ENCODE measurements at regions of chr19 and their contacts with region 1.

Region 1: DNA sequence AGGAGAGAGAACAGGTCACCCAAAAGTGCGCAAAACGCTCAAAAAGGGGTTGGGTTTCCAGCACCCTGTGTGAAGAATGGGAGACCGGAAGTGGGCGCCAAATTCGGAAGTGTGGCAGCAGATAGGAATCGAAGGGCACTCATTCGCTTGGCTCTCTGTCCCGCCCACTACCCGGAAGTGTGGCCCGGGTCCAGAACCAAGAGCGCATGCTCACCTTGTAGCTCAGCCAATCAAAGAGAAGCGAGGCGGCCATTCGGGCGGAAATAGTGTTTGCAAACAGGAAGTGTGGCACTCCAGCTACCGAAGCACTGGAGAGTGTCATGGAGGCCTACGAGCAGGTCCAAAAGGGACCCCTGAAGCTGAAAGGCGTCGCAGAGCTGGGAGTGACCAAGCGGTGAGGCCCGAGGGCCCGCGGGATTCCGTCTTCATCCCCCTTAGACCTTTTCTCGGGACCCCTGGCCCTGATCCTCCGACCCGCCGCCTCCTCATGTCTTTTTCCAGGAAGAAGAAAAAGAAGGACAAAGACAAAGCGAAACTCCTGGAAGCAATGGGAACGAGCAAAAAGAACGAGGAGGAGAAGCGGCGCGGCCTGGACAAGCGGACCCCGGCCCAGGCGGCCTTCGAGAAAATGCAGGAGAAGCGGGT is at the start of gene FAM32A:
- DNase-seq: peak; percentile 99
- H3K4me3 Mint-ChIP-seq: peak within 1 kb of the TSS; percentile 94
- H3K27ac Mint-ChIP-seq: peak within 1 kb of the TSS; percentile 94
- H3K4me1 Mint-ChIP-seq: peaks cover 36% of the 10 kb centered on the region
- H3K27me3 Mint-ChIP-seq: no peaks in the 10 kb centered on the region
- total RNA-seq, gene FAM32A: 71.6 and 72.8 TPM in 2 replicates

Region 2: GRCh38 chr19:16041299-16041990 is 143.8 kb before region 1 on chr19:
- intact Hi-C with region 1: loop called (anchors 1 kb)
- DNase-seq: peak; percentile 64
- H3K4me3 Mint-ChIP-seq: peak overlapping the region; percentile 45
- H3K27ac Mint-ChIP-seq: no peak overlapping the region
- H3K4me1 Mint-ChIP-seq: peaks cover 5% of the 10 kb centered on the region
- H3K27me3 Mint-ChIP-seq: peaks cover 4% of the 10 kb centered on the region

Region 3: GRCh38 chr19:16118489-16119033 is 66.7 kb before region 1 on chr19:
- intact Hi-C with region 1: loop called (anchors 1 kb)
- DNase-seq: peak; percentile 41
- H3K4me3 Mint-ChIP-seq: peak overlapping the region; percentile 70
- H3K27ac Mint-ChIP-seq: peak overlapping the region; percentile 95
- H3K4me1 Mint-ChIP-seq: peaks cover 51% of the 10 kb centered on the region
- H3K27me3 Mint-ChIP-seq: peaks cover 1% of the 10 kb centered on the region

Region 4: GRCh38 chr19:16160943-16161560 is 24.2 kb before region 1 on chr19:
- intact Hi-C with region 1: loop called (anchors 1 kb)
- DNase-seq: no peak
- H3K4me3 Mint-ChIP-seq: peak overlapping the region; percentile 4
- H3K27ac Mint-ChIP-seq: peak overlapping the region; percentile 68
- H3K4me1 Mint-ChIP-seq: peaks cover 16% of the 10 kb centered on the region
- H3K27me3 Mint-ChIP-seq: peaks cover 2% of the 10 kb centered on the region

Region 5: DNA sequence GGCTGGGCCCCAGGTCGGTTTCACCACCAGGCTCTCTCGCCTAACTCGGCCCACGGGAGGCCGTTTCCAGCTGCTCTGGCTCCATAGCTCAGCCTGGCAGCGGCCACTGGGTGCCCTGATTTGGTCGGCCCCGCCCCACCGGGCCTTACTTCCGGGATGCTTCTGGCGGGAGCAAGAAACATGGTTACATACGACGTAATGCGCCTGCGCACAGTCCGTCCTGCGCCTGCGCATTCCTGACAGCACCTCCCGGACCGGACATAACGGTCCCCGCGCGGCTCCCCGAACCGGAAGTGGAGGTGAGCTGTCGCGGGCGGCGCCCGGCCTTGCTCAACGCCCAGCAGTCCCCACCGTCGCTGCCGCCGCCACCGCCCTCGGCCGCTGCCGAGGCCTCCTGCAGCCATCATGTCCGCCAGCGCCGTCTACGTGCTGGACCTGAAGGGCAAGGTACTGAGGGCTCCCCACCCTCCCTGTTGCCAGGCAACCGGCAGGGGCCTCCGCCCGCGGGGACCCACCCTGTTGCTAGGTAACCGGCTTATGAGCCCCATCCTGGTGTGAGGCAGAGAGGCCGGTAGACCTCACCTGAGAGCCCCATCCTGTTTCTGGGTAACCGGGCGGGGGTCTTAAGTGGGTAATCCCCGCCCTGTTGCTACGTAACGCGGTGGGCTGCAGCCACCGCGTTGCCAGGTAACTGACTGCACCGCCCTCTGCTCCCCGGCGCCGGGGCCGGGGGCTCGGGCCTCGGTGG is 12.6 kb after region 1 on chr19 and contains the start of gene AP1M1:
- intact Hi-C with region 1: loop called (anchors 1 kb)
- DNase-seq: peak; percentile 99
- H3K4me3 Mint-ChIP-seq: peak within 1 kb of the TSS; percentile 95
- H3K27ac Mint-ChIP-seq: peak within 1 kb of the TSS; percentile 95
- H3K4me1 Mint-ChIP-seq: peaks cover 51% of the 10 kb centered on the region
- H3K27me3 Mint-ChIP-seq: no peaks in the 10 kb centered on the region
- total RNA-seq, gene AP1M1: 116 and 117 TPM in 2 replicates

Measured in activated T-helper 1 cell treated with anti-CD3 and anti-CD28 coated beads, Interleukin-12 subunit alpha, Interleukin-12 subunit beta, Interleukin-2, Interleukin-4 antibody, amounts not matched to agents 30 ng/mL and 10 ng/mL and 1 ng/mL, durations not matched to agents 14 hours and 24 hours and 36 hours (primary cell).